Mucosa of descending colon (tissue), 3 donors: ENCODE measurements at regions of chr9 and their contacts with region 1.

Region 1: DNA sequence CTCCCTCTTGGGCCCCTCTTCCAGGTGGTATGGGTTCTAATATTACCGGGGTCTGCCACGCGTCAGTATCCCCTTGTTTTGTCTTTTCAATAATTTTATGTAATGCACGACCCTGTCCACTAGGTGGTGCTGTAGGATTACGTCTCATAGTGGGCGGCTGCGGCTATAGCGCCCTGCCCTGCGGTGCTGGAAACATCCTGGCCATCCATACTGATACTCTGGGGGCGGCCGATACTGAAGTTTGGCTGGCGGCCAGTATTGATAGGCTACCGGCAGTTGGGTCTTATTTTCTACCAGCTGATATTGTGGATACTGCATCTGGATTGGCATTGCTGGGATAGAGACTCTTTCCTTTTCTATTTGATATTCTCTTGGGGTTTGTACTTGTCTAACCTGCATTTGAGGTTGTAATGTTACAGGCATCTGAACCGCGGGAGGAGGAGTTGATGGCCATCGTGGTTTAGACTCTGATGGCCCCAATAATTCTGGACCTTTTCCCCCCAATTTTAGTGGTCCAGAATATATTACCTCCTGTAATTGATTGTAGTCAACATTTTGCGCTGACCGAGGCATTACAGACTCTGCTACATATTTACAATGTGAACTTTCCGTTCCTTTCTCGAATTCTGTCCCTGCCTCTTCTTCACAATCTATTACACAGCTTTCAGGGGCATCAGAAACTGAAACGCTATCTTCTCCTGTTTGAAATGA is 3.3 kb upstream of the TMEM141 start:
- DNase-seq: peak; percentile 76 to 88 (median 80)
- ATAC-seq: peak; percentile 13
- H3K4me3 ChIP-seq: no peak overlapping the region
- H3K4me1 ChIP-seq: peaks cover 38% of the 10 kb centered on the region
- CTCF ChIP-seq: peak; percentile 56

Region 2: DNA sequence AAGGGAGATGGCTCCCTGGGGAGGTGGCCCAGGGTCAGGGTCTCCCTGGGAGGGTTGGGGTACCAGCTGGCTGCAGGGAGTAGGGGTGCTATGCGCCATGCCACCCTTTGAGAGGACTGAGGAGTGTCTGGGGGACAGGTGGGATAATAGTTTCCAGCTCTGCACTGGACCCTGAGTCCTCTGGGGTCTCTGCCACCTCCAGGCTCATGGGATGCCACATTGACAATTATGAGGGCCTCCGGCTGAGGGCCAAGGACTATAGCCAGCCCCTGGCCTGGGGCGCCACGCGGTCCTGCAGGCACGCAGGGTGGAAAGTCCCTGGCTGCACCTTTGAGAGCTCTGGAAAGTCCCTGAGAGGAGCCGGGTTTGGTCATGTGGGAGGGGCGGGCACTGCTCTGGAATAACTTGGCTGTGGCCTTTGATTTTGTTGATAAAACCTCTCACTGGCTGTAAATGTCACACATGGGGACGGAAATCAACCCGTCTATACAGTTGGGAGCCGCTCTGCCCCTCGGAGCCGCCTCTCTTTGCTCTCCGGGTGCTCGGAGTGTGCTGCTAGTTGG is 114.5 kb after region 1 on chr9:
- intact Hi-C with region 1: no loop called
- DNase-seq: peak; percentile 89 to 93 (median 92)
- ATAC-seq: peak; percentile 85
- H3K4me3 ChIP-seq: no peak overlapping the region
- H3K4me1 ChIP-seq: peaks cover 55% of the 10 kb centered on the region
- CTCF ChIP-seq: no peak

Region 3: DNA sequence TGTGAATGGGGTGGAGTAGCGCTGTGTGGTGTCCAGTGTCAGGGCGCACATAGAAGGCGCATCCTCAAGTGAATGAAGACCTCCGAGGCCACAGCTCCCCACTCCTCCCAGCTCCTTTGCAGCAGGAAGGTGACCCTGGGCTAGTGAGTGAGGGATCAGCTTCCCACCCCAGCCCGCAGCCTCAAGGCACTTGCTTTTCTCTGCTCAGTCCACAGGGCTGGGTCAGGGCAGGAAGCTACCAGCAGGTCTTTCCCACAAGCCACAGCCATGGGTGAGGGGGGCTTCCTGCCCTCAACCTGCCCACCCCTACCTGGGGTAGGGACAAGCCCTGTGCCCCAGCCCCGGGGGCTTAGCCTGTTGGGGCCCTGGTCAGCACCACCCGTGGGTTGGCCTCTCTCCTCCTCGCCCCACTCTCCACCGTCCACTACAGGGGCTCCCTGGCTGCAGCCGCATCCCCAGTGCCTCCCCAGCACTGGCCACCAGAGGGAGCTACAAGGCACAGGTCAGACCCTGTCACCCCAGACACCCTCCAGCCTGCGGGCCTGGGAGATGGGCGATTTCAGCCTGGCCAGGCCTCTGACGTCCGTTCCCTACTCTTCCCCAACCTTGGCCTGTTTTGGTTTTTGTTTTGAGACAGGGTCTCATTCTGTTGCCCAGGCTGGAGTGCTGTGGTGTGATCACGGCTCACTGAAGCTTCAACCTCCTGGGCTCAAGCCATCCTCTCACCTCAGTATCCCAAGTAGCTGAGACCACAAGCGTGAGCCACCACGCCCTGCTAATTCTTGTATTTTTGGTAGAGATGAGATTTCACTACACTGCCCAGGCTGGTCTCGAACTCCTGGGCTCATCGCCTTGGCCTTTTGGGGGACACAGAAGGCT is 241.5 kb after region 1 on chr9:
- intact Hi-C with region 1: loop called (anchors 5 kb)
- DNase-seq: peak; percentile 85 to 90 (median 89)
- ATAC-seq: peak; percentile 71
- H3K4me3 ChIP-seq: no peak overlapping the region
- H3K4me1 ChIP-seq: peaks cover 41% of the 10 kb centered on the region
- CTCF ChIP-seq: peak; percentile 92

Region 4: DNA sequence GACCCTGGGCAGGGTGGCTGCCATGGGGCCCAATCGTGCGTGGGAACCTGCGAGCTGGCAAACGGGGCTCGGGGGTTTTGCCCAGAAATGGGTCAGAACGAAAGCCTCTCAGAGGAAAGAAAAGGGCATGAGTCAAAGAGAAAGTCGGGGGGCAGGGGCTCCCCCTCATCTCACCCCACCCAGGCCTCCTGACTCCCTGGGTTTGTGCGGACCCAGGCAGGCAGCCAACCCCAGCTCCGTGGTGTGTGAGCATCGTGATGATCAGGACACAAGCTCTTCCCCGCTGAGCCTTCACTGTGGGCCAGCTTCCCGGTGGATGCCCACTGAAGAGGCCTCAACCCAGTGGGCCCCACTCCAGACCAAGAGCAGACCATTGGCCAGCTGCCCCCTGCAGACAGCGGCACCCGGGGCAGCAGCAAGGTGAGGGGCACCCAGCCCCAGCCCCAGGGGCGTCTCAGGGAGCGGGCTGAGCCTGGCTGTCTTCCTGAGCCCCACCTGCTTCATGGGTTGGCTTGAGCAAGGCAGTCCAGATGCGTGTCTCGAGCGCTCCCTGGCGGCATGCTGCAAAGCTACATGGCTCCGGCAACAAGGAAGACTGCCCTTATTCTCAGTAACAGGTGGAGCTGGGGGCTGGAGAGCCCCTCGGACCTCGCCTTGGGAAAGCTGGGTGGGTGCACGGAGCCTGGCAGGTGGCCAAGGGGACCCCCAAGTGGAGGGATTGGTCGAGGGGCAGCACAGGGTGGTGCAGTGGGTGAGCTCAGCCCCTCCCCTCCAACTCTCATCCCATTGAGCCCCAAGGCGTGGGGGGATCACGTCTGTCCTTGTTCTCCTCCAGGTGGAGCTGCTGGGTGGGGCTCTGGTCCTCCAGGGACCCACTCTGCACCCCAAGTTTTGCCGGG is 247.3 kb after region 1 on chr9:
- intact Hi-C with region 1: loop called in 1 of 2 experiments (anchors 5 kb)
- DNase-seq: peak; percentile 80 to 93 (median 91)
- ATAC-seq: peak; percentile 90
- H3K4me3 ChIP-seq: no peak overlapping the region
- H3K4me1 ChIP-seq: peaks cover 21% of the 10 kb centered on the region
- CTCF ChIP-seq: peak; percentile 90